Activated CD4-positive, alpha-beta memory T cell treated with anti-CD3 and anti-CD28 coated beads for 36 hours (primary cell): ENCODE measurements at regions of chr12 and their contacts with region 1.

Region 1: GRCh38 chr12:107105410-107105703 is 12.0 kb upstream of the CRY1 start:
- DNase-seq: no peak
- H3K4me3 Mint-ChIP-seq: no peak overlapping the region
- H3K27ac Mint-ChIP-seq: no peak overlapping the region
- H3K4me1 Mint-ChIP-seq: peaks cover 8% of the 10 kb centered on the region
- H3K27me3 Mint-ChIP-seq: peaks cover 1% of the 10 kb centered on the region

Region 2: GRCh38 chr12:106955377-106956047 is 149.8 kb before region 1 on chr12 and contains the start of gene TMEM263:
- CTCF ChIA-PET with region 1: interaction called, 11 read pairs
- POLR2A ChIA-PET with region 1: no interaction called
- intact Hi-C with region 1: no loop called
- DNase-seq: peak; percentile 94
- H3K4me3 Mint-ChIP-seq: peak within 1 kb of the TSS; percentile 96
- H3K27ac Mint-ChIP-seq: peak within 1 kb of the TSS; percentile 86
- H3K4me1 Mint-ChIP-seq: peaks cover 16% of the 10 kb centered on the region
- H3K27me3 Mint-ChIP-seq: no peaks in the 10 kb centered on the region
- total RNA-seq, gene TMEM263: 37.8 to 38.3 TPM

Region 3: DNA sequence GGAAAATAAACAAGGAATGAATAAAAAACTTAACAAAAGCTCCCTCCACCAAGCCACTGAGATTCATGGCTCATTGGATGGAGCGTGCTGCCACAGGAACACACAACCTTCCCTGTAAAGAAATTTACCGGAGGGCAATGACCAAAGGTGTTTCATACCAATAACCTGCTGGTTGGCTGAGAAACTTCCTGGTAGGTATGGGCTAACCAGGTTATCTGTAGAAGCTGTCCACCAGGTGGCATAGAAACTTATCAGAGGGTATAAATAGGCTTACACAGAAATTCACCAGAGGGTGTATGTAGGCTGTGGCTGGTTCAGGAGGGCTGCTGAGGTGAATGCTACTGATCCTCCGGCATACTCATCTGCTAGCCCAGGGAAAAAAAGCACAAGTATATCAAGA is 91.3 kb before region 1 on chr12:
- CTCF ChIA-PET with region 1: interaction called, 10 read pairs
- POLR2A ChIA-PET with region 1: no interaction called
- intact Hi-C with region 1: no loop called
- DNase-seq: no peak
- H3K4me3 Mint-ChIP-seq: no peak overlapping the region
- H3K27ac Mint-ChIP-seq: no peak overlapping the region
- H3K4me1 Mint-ChIP-seq: no peaks in the 10 kb centered on the region
- H3K27me3 Mint-ChIP-seq: no peaks in the 10 kb centered on the region

Region 4: GRCh38 chr12:107079172-107080011 is 26.0 kb before region 1 on chr12:
- CTCF ChIA-PET with region 1: interaction called, 16 read pairs
- POLR2A ChIA-PET with region 1: no interaction called
- intact Hi-C with region 1: no loop called
- DNase-seq: no peak
- H3K4me3 Mint-ChIP-seq: no peak overlapping the region
- H3K27ac Mint-ChIP-seq: no peak overlapping the region
- H3K4me1 Mint-ChIP-seq: peaks cover 7% of the 10 kb centered on the region
- H3K27me3 Mint-ChIP-seq: no peaks in the 10 kb centered on the region

Region 5: DNA sequence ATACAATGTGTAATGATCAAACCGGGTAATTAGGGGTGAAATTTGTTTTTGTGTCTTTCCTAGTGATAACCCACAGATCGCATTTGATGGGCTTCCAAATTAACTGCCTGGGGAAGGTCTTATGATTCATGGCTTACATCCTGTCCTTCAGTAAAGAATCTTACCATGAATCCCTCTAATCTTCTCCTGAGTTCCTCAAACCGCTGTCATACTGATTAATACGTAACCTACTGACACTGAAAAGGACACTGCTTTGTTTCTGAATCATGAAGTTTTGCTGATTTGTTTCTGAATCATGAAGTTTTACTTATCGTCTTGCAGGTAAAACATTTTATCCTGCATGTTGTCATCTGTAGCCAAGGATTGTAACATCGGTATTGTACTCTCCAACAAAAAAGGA is 40.0 kb after region 1 on chr12:
- CTCF ChIA-PET with region 1: no interaction called
- POLR2A ChIA-PET with region 1: no interaction called
- intact Hi-C with region 1: no loop called
- DNase-seq: no peak
- H3K4me3 Mint-ChIP-seq: no peak overlapping the region
- H3K27ac Mint-ChIP-seq: no peak overlapping the region
- H3K4me1 Mint-ChIP-seq: no peaks in the 10 kb centered on the region
- H3K27me3 Mint-ChIP-seq: no peaks in the 10 kb centered on the region